ENCODE measurements at regions of chr3 and their contacts with region 1.

Region 1: DNA sequence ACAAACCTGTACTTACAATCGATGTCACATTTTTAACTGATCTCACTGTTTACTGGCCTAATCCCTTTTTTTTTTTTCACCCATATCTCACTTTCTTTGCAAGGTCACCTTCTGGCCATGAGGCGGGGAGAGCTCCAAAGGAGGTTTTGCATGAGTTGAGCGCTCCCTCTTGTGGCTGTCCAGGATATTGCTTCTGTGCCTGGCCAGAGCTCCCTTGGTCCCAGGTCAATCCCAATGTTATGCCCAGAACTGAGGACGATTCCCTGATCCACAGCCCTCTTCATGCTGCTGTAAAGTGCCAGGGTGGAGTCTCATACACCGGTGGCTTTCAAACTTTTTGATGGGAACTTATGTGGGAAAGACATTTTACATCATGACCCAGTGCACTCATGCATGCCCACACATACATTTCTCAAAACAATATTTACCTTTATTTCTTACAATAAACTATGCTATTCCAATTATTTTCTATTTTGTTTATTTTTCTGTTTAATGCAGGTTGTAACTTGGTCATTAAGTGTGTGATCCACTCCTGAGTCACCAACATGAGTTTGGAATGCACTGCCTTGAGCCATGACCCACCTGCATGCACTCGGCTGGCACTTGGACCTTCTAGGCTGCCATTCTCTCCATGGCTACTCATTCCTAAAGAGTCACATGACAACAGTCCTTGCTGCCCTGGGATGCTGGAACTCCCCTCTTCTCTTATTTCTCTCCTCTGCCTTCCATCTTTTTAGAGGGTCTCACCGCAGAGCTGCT is 9.6 kb upstream of the SST start:
- DNase-seq: peak; percentile 83
- ATAC-seq: peak; percentile 63
- H3K4me3 Mint-ChIP-seq: no peak overlapping the region
- H3K27ac Mint-ChIP-seq: no peak overlapping the region
- H3K4me1 Mint-ChIP-seq: peaks cover 7% of the 10 kb centered on the region
- H3K27me3 Mint-ChIP-seq: peaks cover 43% of the 10 kb centered on the region

Region 2: GRCh38 chr3:187223799-187224198 is 456.0 kb before region 1 on chr3:
- CTCF ChIA-PET with region 1: interaction called, 9 read pairs
- POLR2A ChIA-PET with region 1: no interaction called
- intact Hi-C with region 1: loop called (anchors 1 to 5 kb)
- DNase-seq: no peak
- ATAC-seq: no peak
- H3K4me3 Mint-ChIP-seq: no peak overlapping the region
- H3K27ac Mint-ChIP-seq: no peak overlapping the region
- H3K4me1 Mint-ChIP-seq: no peaks in the 10 kb centered on the region
- H3K27me3 Mint-ChIP-seq: peaks cover 3% of the 10 kb centered on the region

Region 3: GRCh38 chr3:187616307-187616972 is 63.4 kb before region 1 on chr3:
- CTCF ChIA-PET with region 1: interaction called, 88 read pairs
- POLR2A ChIA-PET with region 1: no interaction called
- intact Hi-C with region 1: loop called (anchors 1 kb)
- DNase-seq: peak; percentile 80
- ATAC-seq: peak; percentile 71
- H3K4me3 Mint-ChIP-seq: no peak overlapping the region
- H3K27ac Mint-ChIP-seq: no peak overlapping the region
- H3K4me1 Mint-ChIP-seq: no peaks in the 10 kb centered on the region
- H3K27me3 Mint-ChIP-seq: peaks cover 8% of the 10 kb centered on the region

Region 4: GRCh38 chr3:187694801-187695200 is 15.0 kb after region 1 on chr3:
- CTCF ChIA-PET with region 1: interaction called, 11 read pairs
- POLR2A ChIA-PET with region 1: no interaction called
- intact Hi-C with region 1: no loop called
- DNase-seq: no peak
- ATAC-seq: no peak
- H3K4me3 Mint-ChIP-seq: no peak overlapping the region
- H3K27ac Mint-ChIP-seq: no peak overlapping the region
- H3K4me1 Mint-ChIP-seq: no peaks in the 10 kb centered on the region
- H3K27me3 Mint-ChIP-seq: peaks cover 20% of the 10 kb centered on the region

Region 5: GRCh38 chr3:187773233-187774184 is 93.7 kb after region 1 on chr3:
- CTCF ChIA-PET with region 1: no interaction called
- POLR2A ChIA-PET with region 1: no interaction called
- intact Hi-C with region 1: no loop called
- DNase-seq: no peak
- ATAC-seq: no peak
- H3K4me3 Mint-ChIP-seq: no peak overlapping the region
- H3K27ac Mint-ChIP-seq: no peak overlapping the region
- H3K4me1 Mint-ChIP-seq: peaks cover 48% of the 10 kb centered on the region
- H3K27me3 Mint-ChIP-seq: peaks cover 8% of the 10 kb centered on the region